CD8-positive, alpha-beta T cell (primary cell): ENCODE measurements at regions of chrX and their contacts with region 1.

Region 1: GRCh38 chrX:57573754-57574153 is 18.1 kb upstream of the ZXDB start:
- DNase-seq: peak in 4 of 9 experiments; percentile 8 to 52 (median 26)
- ATAC-seq: no peak
- H3K4me3 ChIP-seq: no peak overlapping the region
- H3K4me3 Mint-ChIP-seq: no peak overlapping the region
- H3K27ac ChIP-seq: no peak overlapping the region
- H3K27ac Mint-ChIP-seq: no peak overlapping the region
- H3K4me1 ChIP-seq: no peaks in the 10 kb centered on the region
- H3K4me1 Mint-ChIP-seq: no peaks in the 10 kb centered on the region
- H3K27me3 ChIP-seq: no peaks in the 10 kb centered on the region
- H3K27me3 Mint-ChIP-seq: no peaks in the 10 kb centered on the region
- CTCF ChIP-seq: no peak

Region 2: GRCh38 chrX:57929373-57929772 is 355.6 kb after region 1 on chrX:
- CTCF ChIA-PET with region 1: no interaction called
- POLR2A ChIA-PET with region 1: no interaction called
- intact Hi-C with region 1: loop called in 1 of 2 experiments (anchors 1 kb)
- DNase-seq: peak in 2 of 9 experiments; percentile 18 to 33
- ATAC-seq: no peak
- H3K4me3 ChIP-seq: no peak overlapping the region
- H3K4me3 Mint-ChIP-seq: no peak overlapping the region
- H3K27ac ChIP-seq: no peak overlapping the region
- H3K27ac Mint-ChIP-seq: no peak overlapping the region
- H3K4me1 ChIP-seq: no peaks in the 10 kb centered on the region
- H3K4me1 Mint-ChIP-seq: no peaks in the 10 kb centered on the region
- H3K27me3 ChIP-seq: no peaks in the 10 kb centered on the region
- H3K27me3 Mint-ChIP-seq: no peaks in the 10 kb centered on the region
- CTCF ChIP-seq: no peak